CD8-positive, alpha-beta T cell (primary cell): ENCODE measurements at regions of chr10 and their contacts with region 1.

Region 1: DNA sequence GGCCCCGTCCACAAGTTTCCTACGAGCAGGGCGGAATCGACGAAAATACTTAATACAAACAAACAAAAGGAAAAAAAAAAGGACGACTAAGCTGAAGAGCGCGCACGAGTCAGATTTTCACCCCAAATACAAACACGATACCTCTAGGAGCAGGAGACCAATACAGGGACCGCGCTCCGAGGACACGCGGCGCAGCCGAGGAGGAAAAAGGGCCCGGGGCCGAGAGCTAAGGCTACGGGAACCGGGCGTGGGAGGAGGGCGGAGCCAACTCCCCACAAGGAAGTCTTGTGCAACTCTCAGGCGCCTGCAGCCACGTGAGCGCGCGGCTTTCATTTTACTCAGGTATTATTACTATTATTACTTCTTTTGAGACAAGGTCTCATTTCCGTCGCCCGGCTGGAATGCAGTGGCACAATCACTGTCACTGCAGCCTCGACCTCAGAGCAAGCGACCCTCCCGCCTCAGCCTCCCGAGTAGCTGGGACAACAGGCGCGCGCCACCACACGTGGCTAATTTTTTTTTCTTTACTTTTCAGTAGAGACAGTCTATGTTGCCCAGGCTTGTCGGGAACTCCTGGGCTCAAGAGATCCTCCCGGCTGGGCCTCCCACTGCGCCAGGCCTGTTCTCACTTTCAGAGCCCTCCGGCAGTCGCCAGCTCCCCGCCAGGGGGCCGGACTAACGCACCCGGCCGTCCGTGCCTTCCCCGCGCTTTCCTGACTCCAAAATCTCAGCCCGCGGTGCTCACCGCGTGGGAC is 1.2 kb downstream of the HNRNPF start:
- DNase-seq: peak; percentile 64 to 95 (median 83)
- ATAC-seq: peak; percentile 24
- H3K4me3 ChIP-seq: peak overlapping the region; percentile 72 to 98
- H3K4me3 Mint-ChIP-seq: peak overlapping the region; percentile 94
- H3K27ac ChIP-seq: peak overlapping the region; percentile 98 to 99
- H3K27ac Mint-ChIP-seq: peak overlapping the region; percentile 97
- H3K4me1 ChIP-seq: peaks cover 39% of the 10 kb centered on the region
- H3K4me1 Mint-ChIP-seq: peaks cover 33% of the 10 kb centered on the region
- H3K27me3 ChIP-seq: no peaks in the 10 kb centered on the region
- H3K27me3 Mint-ChIP-seq: no peaks in the 10 kb centered on the region
- CTCF ChIP-seq: peak; percentile 33

Region 2: DNA sequence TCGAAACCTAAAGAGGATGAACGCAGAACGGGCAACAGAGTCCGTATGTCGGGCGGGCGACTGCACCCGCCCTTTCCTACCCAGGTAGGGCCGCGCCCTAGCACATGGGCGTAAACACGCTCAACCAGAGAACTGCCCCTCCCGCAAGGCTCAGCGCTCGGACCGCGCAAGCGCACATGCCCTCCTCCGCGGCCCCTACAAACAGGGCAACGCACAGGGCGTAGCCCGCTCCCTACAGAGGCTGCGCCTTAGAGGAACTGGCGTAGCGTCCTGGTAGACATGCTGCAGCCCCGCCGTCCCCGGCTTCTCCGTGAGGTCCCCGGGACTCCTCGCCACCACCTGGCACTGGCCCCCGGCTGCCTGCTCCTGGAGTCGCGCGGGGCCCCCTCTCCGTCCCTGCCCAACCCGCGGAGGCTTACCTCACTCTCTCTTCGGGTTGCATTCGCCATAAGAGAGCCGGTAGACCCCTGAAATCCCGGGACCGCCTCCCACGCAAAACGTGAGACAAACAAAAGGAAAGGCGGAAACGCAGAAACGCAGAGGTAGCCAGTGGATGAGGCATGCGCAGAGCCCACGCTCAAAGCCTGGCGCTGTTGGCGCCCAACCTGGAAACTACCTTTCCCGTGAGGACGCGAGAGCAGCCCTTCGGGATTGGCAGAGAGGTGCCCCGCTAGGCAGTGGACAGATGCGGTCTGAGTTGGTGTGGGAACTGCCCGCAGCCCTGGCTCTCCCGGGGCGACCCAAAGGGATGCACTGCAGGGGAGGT is 769.5 kb before region 1 on chr10 and contains the start of gene ZNF33B:
- CTCF ChIA-PET with region 1: no interaction called
- POLR2A ChIA-PET with region 1: no interaction called
- intact Hi-C with region 1: loop called in 1 of 2 experiments (anchors 5 kb)
- DNase-seq: peak; percentile 84 to 97 (median 93)
- ATAC-seq: peak; percentile 92
- H3K4me3 ChIP-seq: peak within 1 kb of the TSS; percentile 82 to 88
- H3K4me3 Mint-ChIP-seq: peak within 1 kb of the TSS; percentile 98
- H3K27ac ChIP-seq: peak within 1 kb of the TSS; percentile 91 to 93
- H3K27ac Mint-ChIP-seq: peak within 1 kb of the TSS; percentile 98
- H3K4me1 ChIP-seq: peaks cover 14% of the 10 kb centered on the region
- H3K4me1 Mint-ChIP-seq: peaks cover 44% of the 10 kb centered on the region
- H3K27me3 ChIP-seq: no peaks in the 10 kb centered on the region
- H3K27me3 Mint-ChIP-seq: no peaks in the 10 kb centered on the region
- CTCF ChIP-seq: no peak
- total RNA-seq, gene ZNF33B: 16.4 to 17.0 TPM

Region 3: GRCh38 chr10:43336641-43337318 is 71.0 kb before region 1 on chr10:
- CTCF ChIA-PET with region 1: no interaction called
- POLR2A ChIA-PET with region 1: no interaction called
- intact Hi-C with region 1: no loop called
- DNase-seq: no peak
- ATAC-seq: no peak
- H3K4me3 ChIP-seq: no peak overlapping the region
- H3K4me3 Mint-ChIP-seq: no peak overlapping the region
- H3K27ac ChIP-seq: no peak overlapping the region
- H3K27ac Mint-ChIP-seq: no peak overlapping the region
- H3K4me1 ChIP-seq: peaks cover 12% of the 10 kb centered on the region
- H3K4me1 Mint-ChIP-seq: peaks cover 14% of the 10 kb centered on the region
- H3K27me3 ChIP-seq: no peaks in the 10 kb centered on the region
- H3K27me3 Mint-ChIP-seq: peaks cover 17% of the 10 kb centered on the region
- CTCF ChIP-seq: no peak

Region 4: GRCh38 chr10:43361986-43362839 is 45.5 kb before region 1 on chr10:
- CTCF ChIA-PET with region 1: no interaction called
- POLR2A ChIA-PET with region 1: interaction called, 7 read pairs
- intact Hi-C with region 1: loop called in 1 of 2 experiments (anchors 2 kb)
- DNase-seq: peak; percentile 94 to 99 (median 97)
- ATAC-seq: peak; percentile 98
- H3K4me3 ChIP-seq: peak overlapping the region; percentile 80
- H3K4me3 Mint-ChIP-seq: peak overlapping the region; percentile 93
- H3K27ac ChIP-seq: peak overlapping the region; percentile 69 to 93
- H3K27ac Mint-ChIP-seq: peak overlapping the region; percentile 98
- H3K4me1 ChIP-seq: peaks cover 15% of the 10 kb centered on the region
- H3K4me1 Mint-ChIP-seq: peaks cover 26% of the 10 kb centered on the region
- H3K27me3 ChIP-seq: no peaks in the 10 kb centered on the region
- H3K27me3 Mint-ChIP-seq: no peaks in the 10 kb centered on the region
- CTCF ChIP-seq: peak; percentile 24

Region 5: DNA sequence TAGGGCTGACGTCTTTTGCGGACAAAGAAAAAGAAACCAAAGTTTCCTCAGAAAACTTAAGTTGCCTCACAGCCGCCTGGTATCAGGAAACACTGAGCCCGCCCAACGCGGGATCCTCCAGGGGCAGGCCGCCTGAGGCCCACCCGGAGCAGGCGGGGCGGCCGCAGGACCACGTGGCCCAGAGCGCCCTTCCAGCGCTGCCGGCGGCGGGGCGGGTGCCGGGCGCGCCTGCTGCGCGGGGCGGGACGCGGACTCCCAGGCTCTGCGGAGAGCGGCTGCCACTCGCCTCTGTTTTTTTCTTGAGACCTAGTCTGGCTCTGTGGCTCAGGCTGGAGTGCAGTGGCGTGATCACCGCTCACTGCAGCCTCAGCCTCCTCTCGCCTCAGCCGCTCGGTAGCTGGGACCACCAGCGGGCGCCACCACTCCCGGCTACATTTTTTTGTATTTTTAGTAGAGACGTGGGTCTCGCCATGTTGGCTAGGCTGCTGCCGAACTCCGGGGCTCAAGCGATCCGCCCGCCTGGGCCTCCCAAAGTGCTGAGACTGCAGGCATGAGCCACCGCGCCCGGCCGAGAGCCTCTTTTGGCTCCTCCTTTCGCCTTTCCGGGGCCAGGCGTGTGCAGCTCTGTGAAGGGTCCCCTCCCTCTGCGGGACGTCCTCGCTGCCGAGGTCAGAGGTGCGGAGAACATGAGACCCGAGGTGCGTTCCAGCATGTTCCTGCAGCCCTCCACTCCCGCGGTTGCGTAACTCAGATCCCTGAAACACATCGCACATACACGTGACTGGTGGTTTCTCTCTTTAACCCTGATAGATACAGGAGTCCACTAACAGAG is 12.8 kb after region 1 on chr10:
- CTCF ChIA-PET with region 1: interaction called, 6 read pairs
- POLR2A ChIA-PET with region 1: interaction called, 51 read pairs
- intact Hi-C with region 1: loop called (anchors 1 kb)
- DNase-seq: peak; percentile 64 to 96 (median 86)
- ATAC-seq: peak; percentile 87
- H3K4me3 ChIP-seq: peak overlapping the region; percentile 65 to 92
- H3K4me3 Mint-ChIP-seq: peak overlapping the region; percentile 93
- H3K27ac ChIP-seq: peak overlapping the region; percentile 82 to 83
- H3K27ac Mint-ChIP-seq: peak overlapping the region; percentile 98
- H3K4me1 ChIP-seq: peaks cover 40% of the 10 kb centered on the region
- H3K4me1 Mint-ChIP-seq: peaks cover 33% of the 10 kb centered on the region
- H3K27me3 ChIP-seq: no peaks in the 10 kb centered on the region
- H3K27me3 Mint-ChIP-seq: no peaks in the 10 kb centered on the region
- CTCF ChIP-seq: no peak

Region 6: DNA sequence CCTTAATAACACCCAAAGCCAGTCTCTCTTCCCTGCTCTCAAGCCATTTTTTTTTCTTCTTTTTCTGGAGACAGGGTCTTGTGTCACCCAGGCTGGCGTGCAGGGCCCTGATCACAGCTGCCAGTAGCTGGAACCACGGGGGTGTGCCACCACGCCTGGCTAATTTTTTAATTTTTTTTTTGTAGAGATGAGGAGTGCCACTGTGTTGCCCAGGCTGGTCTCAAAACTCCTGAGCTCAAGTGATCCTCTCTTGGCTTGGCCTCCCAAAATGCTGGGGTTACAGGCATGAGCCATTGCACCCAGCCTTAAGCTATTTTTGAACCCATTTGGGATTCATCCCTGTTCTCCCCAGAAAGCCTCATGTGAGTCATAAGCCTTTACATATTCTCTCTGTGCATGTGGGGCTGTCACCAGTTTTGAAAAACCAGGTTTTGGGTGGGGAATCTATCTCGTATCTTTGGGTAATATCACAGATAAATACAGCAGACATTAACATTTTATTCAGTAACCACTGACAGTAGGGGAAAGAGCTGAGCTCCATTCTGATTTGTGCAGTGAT is 44.7 kb after region 1 on chr10:
- CTCF ChIA-PET with region 1: no interaction called
- POLR2A ChIA-PET with region 1: interaction called, 11 read pairs
- intact Hi-C with region 1: no loop called
- DNase-seq: no peak
- ATAC-seq: no peak
- H3K4me3 ChIP-seq: no peak overlapping the region
- H3K4me3 Mint-ChIP-seq: peak overlapping the region; percentile 67
- H3K27ac ChIP-seq: peak overlapping the region; percentile 44 to 92
- H3K27ac Mint-ChIP-seq: peak overlapping the region; percentile 94
- H3K4me1 ChIP-seq: peaks cover 51% of the 10 kb centered on the region
- H3K4me1 Mint-ChIP-seq: peaks cover 46% of the 10 kb centered on the region
- H3K27me3 ChIP-seq: no peaks in the 10 kb centered on the region
- H3K27me3 Mint-ChIP-seq: no peaks in the 10 kb centered on the region
- CTCF ChIP-seq: no peak

Region 7: GRCh38 chr10:43479275-43479674 is 71.5 kb after region 1 on chr10:
- CTCF ChIA-PET with region 1: no interaction called
- POLR2A ChIA-PET with region 1: no interaction called
- intact Hi-C with region 1: no loop called
- DNase-seq: no peak
- ATAC-seq: no peak
- H3K4me3 ChIP-seq: no peak overlapping the region
- H3K4me3 Mint-ChIP-seq: no peak overlapping the region
- H3K27ac ChIP-seq: no peak overlapping the region
- H3K27ac Mint-ChIP-seq: no peak overlapping the region
- H3K4me1 ChIP-seq: no peaks in the 10 kb centered on the region
- H3K4me1 Mint-ChIP-seq: no peaks in the 10 kb centered on the region
- H3K27me3 ChIP-seq: no peaks in the 10 kb centered on the region
- H3K27me3 Mint-ChIP-seq: no peaks in the 10 kb centered on the region
- CTCF ChIP-seq: no peak

Region 8: DNA sequence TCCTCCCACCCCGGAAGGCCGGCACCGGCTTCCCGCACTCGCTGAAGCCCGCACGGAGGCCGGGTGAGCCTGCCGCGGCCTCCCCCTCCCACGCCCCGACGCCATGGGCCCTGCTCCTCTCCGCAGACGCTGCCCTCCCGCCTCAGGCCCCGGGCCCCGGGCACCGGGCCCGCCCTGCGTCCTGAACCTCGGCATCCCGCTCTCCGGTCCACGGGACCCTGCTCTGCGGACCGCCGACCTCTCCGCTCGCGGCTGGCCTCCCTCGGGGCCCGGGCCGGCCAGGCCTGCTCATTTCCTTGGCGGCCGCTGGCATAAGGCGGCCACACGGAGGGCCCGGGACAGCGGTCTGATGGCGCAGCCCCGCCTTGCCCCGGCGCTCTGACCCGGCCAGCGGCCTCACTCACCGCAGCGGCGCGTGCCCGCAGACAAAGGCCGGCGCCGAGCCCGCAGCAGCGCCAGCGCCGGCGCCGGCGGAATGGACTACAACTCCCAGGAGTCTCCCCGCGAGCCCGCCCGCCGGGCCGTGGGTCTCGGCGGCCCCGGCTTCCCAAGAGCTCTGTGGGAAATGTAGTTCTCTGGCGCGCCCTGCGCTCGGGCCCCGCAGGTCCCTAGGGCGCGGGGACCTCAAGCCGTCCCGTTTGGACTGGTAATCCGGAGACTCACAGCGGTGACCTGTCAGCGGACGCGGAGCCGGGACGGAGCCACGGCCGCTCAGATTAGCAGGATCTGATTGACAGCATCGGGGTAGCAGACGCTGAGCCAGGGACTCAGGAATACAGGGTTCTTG is 240.8 kb after region 1 on chr10 and contains the start of gene ZNF32:
- CTCF ChIA-PET with region 1: no interaction called
- POLR2A ChIA-PET with region 1: no interaction called
- intact Hi-C with region 1: loop called (anchors 2 to 5 kb)
- DNase-seq: peak; percentile 60 to 89 (median 79)
- ATAC-seq: peak; percentile 97
- H3K4me3 ChIP-seq: peak within 1 kb of the TSS; percentile 74 to 92
- H3K4me3 Mint-ChIP-seq: peak within 1 kb of the TSS; percentile 97
- H3K27ac ChIP-seq: peak within 1 kb of the TSS; percentile 48 to 80
- H3K27ac Mint-ChIP-seq: peak within 1 kb of the TSS; percentile 92
- H3K4me1 ChIP-seq: peaks cover 14% of the 10 kb centered on the region
- H3K4me1 Mint-ChIP-seq: peaks cover 23% of the 10 kb centered on the region
- H3K27me3 ChIP-seq: no peaks in the 10 kb centered on the region
- H3K27me3 Mint-ChIP-seq: peaks cover 1% of the 10 kb centered on the region
- CTCF ChIP-seq: no peak
- total RNA-seq, gene ZNF32: 17.4 to 18.9 TPM